ENCODE measurements at regions of chr14 and their contacts with region 1.

Region 1: DNA sequence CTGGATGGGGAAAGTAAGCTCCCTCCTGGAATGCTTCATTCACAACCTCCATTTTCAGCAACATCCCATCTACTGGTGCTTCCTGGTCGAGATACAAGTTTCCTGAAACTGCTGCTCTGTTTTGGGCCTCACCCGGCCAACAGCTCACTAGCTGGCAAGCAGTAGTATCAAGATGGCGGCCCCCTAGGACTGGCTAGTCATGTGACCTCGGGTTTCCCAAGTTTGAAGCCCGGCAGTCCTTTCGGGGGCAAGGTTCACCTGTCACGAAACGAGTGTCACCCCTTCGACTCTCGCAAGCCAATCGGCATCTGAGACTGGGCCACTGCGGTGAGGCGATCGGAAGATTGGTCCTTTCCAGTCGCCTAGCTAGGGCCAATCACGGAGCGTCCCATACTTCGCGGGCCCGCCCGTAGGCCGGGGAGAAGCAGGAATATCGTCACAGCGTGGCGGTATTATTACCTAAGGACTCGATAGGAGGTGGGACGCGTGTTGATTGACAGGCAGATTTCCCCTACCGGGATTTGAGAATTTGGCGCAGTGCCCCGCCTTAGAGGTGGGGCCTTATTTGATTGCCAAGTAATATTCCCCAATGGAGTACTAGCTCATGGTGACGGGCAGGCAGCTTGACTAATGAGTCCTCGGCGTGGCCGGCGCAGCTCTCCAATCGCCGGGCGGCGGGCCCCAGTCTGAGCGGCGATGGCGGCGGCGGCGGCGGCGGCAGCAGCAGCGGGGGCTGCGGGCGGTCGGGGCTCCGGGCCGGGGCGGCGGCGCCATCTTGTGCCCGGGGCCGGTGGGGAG is at the start of gene PABPN1:
- DNase-seq: peak; percentile 98
- H3K4me3 Mint-ChIP-seq: peak within 1 kb of the TSS; percentile 97
- H3K27ac Mint-ChIP-seq: peak within 1 kb of the TSS; percentile 97
- H3K4me1 Mint-ChIP-seq: peaks cover 30% of the 10 kb centered on the region
- H3K27me3 Mint-ChIP-seq: no peaks in the 10 kb centered on the region
- total RNA-seq, gene PABPN1: 252 and 266 TPM in 2 replicates

Region 2: GRCh38 chr14:22929104-22929847 is 391.7 kb before region 1 on chr14 and contains the start of gene PRMT5:
- intact Hi-C with region 1: loop called (anchors 1 kb)
- DNase-seq: peak; percentile 95
- H3K4me3 Mint-ChIP-seq: no peak within 1 kb of the TSS
- H3K27ac Mint-ChIP-seq: no peak within 1 kb of the TSS
- H3K4me1 Mint-ChIP-seq: peaks cover 32% of the 10 kb centered on the region
- H3K27me3 Mint-ChIP-seq: no peaks in the 10 kb centered on the region
- total RNA-seq, gene PRMT5: 174 and 180 TPM in 2 replicates

Region 3: GRCh38 chr14:23034483-23035302 is 286.3 kb before region 1 on chr14 and contains the start of gene PSMB5:
- intact Hi-C with region 1: loop called (anchors 1 kb)
- DNase-seq: peak; percentile 85
- H3K4me3 Mint-ChIP-seq: peak within 1 kb of the TSS; percentile 98
- H3K27ac Mint-ChIP-seq: peak within 1 kb of the TSS; percentile 98
- H3K4me1 Mint-ChIP-seq: peaks cover 28% of the 10 kb centered on the region
- H3K27me3 Mint-ChIP-seq: peaks cover 2% of the 10 kb centered on the region
- total RNA-seq, gene PSMB5: 144 and 148 TPM in 2 replicates

Region 4: DNA sequence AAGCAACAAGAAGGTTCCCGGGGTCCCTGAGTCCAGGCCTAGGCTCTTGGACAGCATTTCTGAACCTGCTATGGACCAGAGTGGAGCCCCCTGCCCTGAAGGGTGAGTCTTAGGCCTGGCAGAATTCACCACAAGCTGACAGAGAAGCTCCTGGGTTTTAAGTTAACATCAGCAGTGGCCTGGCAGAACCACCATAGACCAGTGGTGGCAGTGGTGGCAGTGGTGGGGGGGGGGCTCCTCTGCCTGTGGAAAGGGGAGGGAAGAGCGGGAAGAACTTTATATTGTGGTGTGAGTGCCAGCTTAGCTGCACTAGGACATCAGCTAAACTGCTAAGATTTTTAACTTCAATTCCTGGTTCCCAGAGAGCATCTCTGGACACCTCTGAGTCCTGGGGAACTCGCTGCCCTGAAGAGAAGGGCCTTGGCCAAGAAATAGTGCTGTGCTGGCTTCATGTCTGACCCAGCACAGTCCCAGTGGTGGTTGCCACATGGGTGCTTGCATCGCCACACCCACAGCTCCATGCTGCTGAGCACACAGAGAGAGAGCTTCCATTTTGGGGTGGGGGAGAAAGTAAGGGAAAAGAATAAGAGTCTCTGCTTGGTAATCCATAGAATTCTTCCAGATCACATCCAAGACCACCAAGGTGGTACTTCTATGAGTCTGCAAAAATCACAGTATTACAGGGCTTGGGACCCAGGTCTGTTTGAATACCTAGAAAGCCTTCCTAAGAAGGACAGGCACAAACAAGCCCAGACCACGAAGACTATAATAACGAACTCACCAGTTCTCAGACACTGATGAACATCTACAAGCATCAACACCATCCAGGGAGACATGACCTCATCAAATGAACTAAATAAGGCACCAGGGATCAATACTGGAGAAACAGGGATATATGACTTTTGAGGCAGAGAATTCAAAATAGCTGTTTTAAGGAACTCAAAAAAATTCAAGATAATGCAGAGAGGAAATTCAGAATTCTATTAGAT is 103.6 kb before region 1 on chr14:
- intact Hi-C with region 1: no loop called
- DNase-seq: no peak
- H3K4me3 Mint-ChIP-seq: no peak overlapping the region
- H3K27ac Mint-ChIP-seq: no peak overlapping the region
- H3K4me1 Mint-ChIP-seq: no peaks in the 10 kb centered on the region
- H3K27me3 Mint-ChIP-seq: peaks cover 16% of the 10 kb centered on the region

Region 5: GRCh38 chr14:23286020-23286905 is 34.7 kb before region 1 on chr14 and contains the start of gene HOMEZ:
- intact Hi-C with region 1: loop called (anchors 1 kb)
- DNase-seq: peak; percentile 98
- H3K4me3 Mint-ChIP-seq: peak within 1 kb of the TSS; percentile 99
- H3K27ac Mint-ChIP-seq: peak within 1 kb of the TSS; percentile 95
- H3K4me1 Mint-ChIP-seq: peaks cover 26% of the 10 kb centered on the region
- H3K27me3 Mint-ChIP-seq: no peaks in the 10 kb centered on the region
- total RNA-seq, gene HOMEZ: 10.9 and 12.2 TPM in 2 replicates

Region 6: GRCh38 chr14:23469127-23469905 is 148.3 kb after region 1 on chr14 and contains the start of gene NGDN:
- intact Hi-C with region 1: loop called (anchors 1 kb)
- DNase-seq: peak; percentile 89
- H3K4me3 Mint-ChIP-seq: no peak within 1 kb of the TSS
- H3K27ac Mint-ChIP-seq: peak within 1 kb of the TSS; percentile 45
- H3K4me1 Mint-ChIP-seq: peaks cover 11% of the 10 kb centered on the region
- H3K27me3 Mint-ChIP-seq: peaks cover 2% of the 10 kb centered on the region
- total RNA-seq, gene NGDN: 80.1 and 84.5 TPM in 2 replicates

Region 7: GRCh38 chr14:23567192-23568020 is 246.4 kb after region 1 on chr14 and contains the start of gene AP1G2:
- intact Hi-C with region 1: no loop called
- DNase-seq: peak; percentile 87
- H3K4me3 Mint-ChIP-seq: peak within 1 kb of the TSS; percentile 100
- H3K27ac Mint-ChIP-seq: peak within 1 kb of the TSS; percentile 97
- H3K4me1 Mint-ChIP-seq: peaks cover 43% of the 10 kb centered on the region
- H3K27me3 Mint-ChIP-seq: peaks cover 4% of the 10 kb centered on the region
- total RNA-seq, gene AP1G2: 137 and 145 TPM in 2 replicates

Region 8: GRCh38 chr14:24141097-24141880 is 820.3 kb after region 1 on chr14 and contains the start of gene EMC9:
- intact Hi-C with region 1: loop called (anchors 10 kb)
- DNase-seq: peak; percentile 100
- H3K4me3 Mint-ChIP-seq: peak within 1 kb of the TSS; percentile 98
- H3K27ac Mint-ChIP-seq: peak within 1 kb of the TSS; percentile 92
- H3K4me1 Mint-ChIP-seq: peaks cover 80% of the 10 kb centered on the region
- H3K27me3 Mint-ChIP-seq: no peaks in the 10 kb centered on the region
- total RNA-seq, gene EMC9: 22.9 and 28.3 TPM in 2 replicates